Dorsolateral prefrontal cortex (tissue), 120 donors: ENCODE measurements at regions of chr4 and their contacts with region 1.

Region 1: DNA sequence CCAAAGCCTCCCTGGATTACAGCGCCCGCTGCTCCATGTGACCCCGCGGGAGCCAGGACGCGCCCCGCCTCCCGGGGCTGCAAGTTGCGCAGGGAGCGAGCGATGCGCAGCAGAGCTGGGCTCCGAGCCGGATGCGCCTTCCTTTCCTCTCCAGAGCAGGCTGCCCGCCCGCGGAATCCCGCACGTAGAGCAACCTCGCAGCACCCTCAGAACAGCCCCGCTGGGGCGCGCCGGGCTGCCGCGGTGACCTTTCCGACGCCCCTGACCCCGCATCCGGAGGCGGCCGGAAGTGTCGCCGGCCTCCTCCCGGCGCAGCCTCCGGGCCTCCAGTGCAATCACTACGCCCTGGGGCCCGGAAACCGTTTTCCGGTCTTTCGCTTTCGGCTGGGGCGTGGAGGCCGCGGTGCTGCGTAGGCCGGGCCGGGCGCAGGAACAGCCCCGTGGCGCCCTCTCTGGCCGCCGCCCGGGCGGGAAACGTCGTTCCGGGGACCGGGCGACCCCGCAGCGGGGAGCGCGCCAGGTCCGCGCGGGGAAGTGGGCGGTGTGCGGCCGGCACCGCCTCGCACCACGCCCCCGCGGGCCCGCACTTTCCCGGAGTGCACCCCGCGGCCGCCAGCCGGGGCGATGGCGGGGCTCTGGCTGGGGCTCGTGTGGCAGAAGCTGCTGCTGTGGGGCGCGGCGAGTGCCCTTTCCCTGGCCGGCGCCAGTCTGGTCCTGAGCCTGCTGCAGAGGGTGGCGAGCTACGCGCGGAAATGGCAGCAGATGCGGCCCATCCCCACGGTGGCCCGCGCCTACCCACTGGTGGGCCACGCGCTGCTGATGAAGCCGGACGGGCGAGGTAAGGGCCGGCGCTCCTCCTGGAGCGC is at the start of gene CYP4V2:
- DNase-seq: peak; percentile 42 to 86 (median 70)
- H3K4me3 ChIP-seq: peak within 1 kb of the TSS; percentile 66 to 97 (median 87)
- H3K27ac ChIP-seq: peak within 1 kb of the TSS; percentile 73 to 100 (median 97)
- H3K27me3 ChIP-seq: no peaks in the 10 kb centered on the region
- CTCF ChIP-seq: peak in 41 of 56 donors; percentile 1 to 70 (median 37)
- total RNA-seq, gene CYP4V2: 15.1 to 68.4 (median 33.4) TPM

Region 2: GRCh38 chr4:186067757-186068385 is 123.6 kb before region 1 on chr4:
- intact Hi-C with region 1: loop called in 1 of 2 experiments (anchors 5 kb)
- DNase-seq: peak in 7 of 10 donors; percentile 34 to 70 (median 61)
- H3K4me3 ChIP-seq: peak overlapping the region in 58 of 59 donors; percentile 19 to 74 (median 56)
- H3K27ac ChIP-seq: peak overlapping the region in 12 of 59 donors; percentile 4 to 79 (median 54)
- H3K27me3 ChIP-seq: peaks cover 0 to 7% (median 0%) of the 10 kb centered on the region in 45 donors
- CTCF ChIP-seq: peak in 55 of 56 donors; percentile 27 to 76 (median 56)

Region 3: DNA sequence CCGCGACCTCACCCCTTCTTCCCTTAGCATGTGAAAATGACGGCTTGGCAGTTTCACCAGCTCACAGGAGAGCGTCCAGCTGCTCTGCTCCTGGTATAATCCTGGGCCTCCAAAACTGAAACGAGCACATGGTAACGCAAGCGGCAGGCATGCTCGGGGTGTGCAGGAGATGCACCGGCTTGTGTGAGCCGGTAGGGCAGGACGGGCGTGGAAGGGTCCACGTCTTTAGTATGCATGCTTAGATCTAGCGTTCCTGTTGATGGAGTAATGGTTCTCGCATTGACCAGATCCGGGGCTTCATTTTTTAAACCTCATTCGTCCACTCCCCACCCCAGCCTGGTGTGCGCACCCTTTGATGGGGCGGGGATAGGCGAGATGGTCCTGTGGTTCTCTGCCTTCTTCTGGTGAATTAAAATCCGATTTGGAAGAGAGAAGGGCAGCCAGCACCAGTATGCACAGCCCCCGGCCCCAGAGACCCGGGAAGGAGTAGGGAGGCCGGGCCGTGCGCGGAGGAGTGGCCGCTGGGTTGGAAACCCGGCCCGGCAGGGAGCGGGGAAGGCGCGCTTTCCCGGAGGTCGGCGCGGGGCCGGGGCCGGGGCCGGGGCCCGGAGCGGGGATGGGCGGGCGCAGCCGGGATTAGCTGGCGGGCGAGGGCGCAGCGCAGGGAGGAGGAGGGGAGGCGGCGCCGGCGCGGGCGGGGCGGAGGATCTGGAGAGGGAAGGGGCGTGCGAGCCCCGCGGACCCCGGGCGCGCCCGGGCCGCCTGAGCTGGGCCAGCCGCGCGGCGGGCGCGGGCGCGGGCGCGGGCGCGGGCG is 47.1 kb before region 1 on chr4:
- intact Hi-C with region 1: loop called in 1 of 2 experiments (anchors 2 kb)
- DNase-seq: peak in 7 of 10 donors; percentile 40 to 69 (median 55)
- H3K4me3 ChIP-seq: peak overlapping the region; percentile 34 to 82 (median 65)
- H3K27ac ChIP-seq: peak overlapping the region in 57 of 59 donors; percentile 12 to 95 (median 78)
- H3K27me3 ChIP-seq: peaks cover 0 to 10% (median 0%) of the 10 kb centered on the region in 45 donors
- CTCF ChIP-seq: peak in 4 of 56 donors; percentile 7 to 26 (median 14)

Region 4: GRCh38 chr4:186149872-186150271 is 41.6 kb before region 1 on chr4:
- intact Hi-C with region 1: loop called (anchors 2 to 5 kb)
- DNase-seq: no peak
- H3K4me3 ChIP-seq: peak overlapping the region in 28 of 59 donors; percentile 1 to 43 (median 20)
- H3K27ac ChIP-seq: peak overlapping the region in 3 of 59 donors; percentile 15 to 49 (median 18)
- H3K27me3 ChIP-seq: peaks cover 0 to 13% (median 0%) of the 10 kb centered on the region in 45 donors
- CTCF ChIP-seq: peak in 33 of 56 donors; percentile 15 to 63 (median 48)

Region 5: DNA sequence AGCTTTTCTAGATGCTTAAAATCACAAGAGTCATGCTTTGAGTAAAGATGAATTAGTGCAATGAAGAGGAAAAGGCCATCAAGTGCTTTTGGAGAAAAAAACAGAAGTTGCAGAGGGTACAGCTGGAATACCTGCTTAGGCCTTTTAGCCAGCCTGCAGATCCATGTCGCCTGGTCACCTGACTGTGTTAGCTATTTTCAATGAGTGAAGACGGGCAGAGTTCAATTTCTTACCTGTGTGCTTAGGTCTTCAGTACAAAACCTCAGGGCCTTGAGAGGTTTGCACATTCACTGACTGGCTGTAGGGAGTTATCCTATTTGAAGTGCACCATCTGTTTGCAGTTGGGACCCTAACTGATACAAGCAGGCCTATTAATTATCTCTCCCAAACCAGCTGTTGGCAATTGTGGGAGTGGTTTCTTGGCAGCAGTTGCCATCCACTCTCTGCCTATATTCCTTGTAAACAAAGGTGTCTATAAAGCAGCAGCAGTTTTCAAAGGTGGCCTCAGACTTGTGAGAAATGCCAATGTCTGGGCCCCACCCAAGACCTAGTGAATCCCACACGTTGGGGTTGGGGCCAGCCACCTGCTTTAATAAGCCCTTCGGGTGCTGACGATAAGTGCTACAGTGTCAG is 548.5 kb after region 1 on chr4:
- intact Hi-C with region 1: no loop called
- DNase-seq: no peak
- H3K4me3 ChIP-seq: no peak overlapping the region
- H3K27ac ChIP-seq: no peak overlapping the region
- H3K27me3 ChIP-seq: peaks cover 0 to 17% (median 0%) of the 10 kb centered on the region in 45 donors
- CTCF ChIP-seq: no peak